Activated T-helper 2 cell treated with anti-CD3 and anti-CD28 coated beads, Interferon-gamma antibody, Interleukin-2, Interleukin-4, amounts not matched to agents 10 μg/mL and 5 μg/mL and 100 μg/mL, durations not matched to agents 14 hours and 24 hours and 36 hours (primary cell): ENCODE measurements at regions of chr15 and their contacts with region 1.

Region 1: DNA sequence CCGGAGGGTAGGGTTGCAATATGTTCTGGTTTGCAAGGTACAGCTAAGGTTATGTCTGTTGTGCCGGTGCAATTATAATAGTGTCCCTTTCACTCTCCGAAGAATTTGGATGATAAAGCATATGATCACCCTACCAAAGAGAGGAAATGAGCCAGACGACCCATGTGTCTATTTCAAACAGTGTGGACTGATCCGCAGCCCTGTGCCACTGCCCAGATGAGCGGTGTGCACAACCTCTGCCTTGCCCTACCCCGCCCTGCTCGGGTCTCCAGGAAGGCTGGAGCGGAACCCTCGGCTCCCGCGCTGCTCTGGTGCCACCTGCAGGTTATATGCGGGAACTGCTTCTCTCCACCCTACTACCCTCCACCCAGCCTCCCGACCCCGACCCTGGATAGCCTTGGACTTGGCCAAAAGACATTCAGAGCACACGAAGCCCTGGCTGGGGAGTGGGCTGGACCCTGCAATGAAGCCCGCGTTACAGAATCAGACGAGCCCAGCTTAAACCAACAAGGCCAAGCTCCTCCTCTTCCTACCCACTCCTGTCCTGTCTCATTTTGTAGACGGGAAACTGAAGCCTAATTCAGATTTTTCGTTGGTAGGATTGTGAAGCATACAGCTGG is 68.4 kb upstream of the CHRNB4 start:
- DNase-seq: peak; percentile 58
- H3K4me3 Mint-ChIP-seq: no peak overlapping the region
- H3K27ac Mint-ChIP-seq: no peak overlapping the region
- H3K4me1 Mint-ChIP-seq: peaks cover 6% of the 10 kb centered on the region
- H3K27me3 Mint-ChIP-seq: peaks cover 36% of the 10 kb centered on the region

Region 2: GRCh38 chr15:78308422-78309032 is 400.8 kb before region 1 on chr15:
- intact Hi-C with region 1: loop called (anchors 2 kb)
- DNase-seq: peak; percentile 47
- H3K4me3 Mint-ChIP-seq: no peak overlapping the region
- H3K27ac Mint-ChIP-seq: no peak overlapping the region
- H3K4me1 Mint-ChIP-seq: no peaks in the 10 kb centered on the region
- H3K27me3 Mint-ChIP-seq: no peaks in the 10 kb centered on the region

Region 3: DNA sequence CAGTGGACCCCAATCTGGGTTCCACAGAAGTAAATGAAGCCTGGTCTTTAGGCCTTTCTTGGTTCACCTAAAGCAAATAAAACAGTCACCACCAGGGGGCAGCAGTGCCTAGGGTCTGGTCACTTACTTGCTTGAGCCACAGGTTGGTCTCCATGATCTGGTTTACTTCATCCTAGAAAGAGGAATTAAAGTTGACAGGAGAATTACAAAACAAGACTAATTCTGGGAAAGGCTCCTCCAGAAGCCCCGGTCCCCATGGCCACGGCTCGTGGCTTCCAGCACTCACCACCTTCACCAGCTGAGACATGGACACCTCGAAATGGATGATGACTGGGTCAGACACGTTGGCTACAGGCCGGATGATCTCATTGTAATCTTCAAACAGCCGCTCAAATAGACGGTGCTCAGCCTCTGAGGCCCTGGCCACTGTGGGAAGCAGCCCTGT is 90.9 kb before region 1 on chr15:
- intact Hi-C with region 1: loop called (anchors 1 kb)
- DNase-seq: peak; percentile 53
- H3K4me3 Mint-ChIP-seq: no peak overlapping the region
- H3K27ac Mint-ChIP-seq: no peak overlapping the region
- H3K4me1 Mint-ChIP-seq: peaks cover 3% of the 10 kb centered on the region
- H3K27me3 Mint-ChIP-seq: peaks cover 43% of the 10 kb centered on the region

Region 4: GRCh38 chr15:78640840-78641719 is 68.3 kb before region 1 on chr15 and contains the start of gene CHRNB4:
- intact Hi-C with region 1: loop called (anchors 1 kb)
- DNase-seq: no peak
- H3K4me3 Mint-ChIP-seq: peak within 1 kb of the TSS; percentile 61
- H3K27ac Mint-ChIP-seq: no peak within 1 kb of the TSS
- H3K4me1 Mint-ChIP-seq: peaks cover 7% of the 10 kb centered on the region
- H3K27me3 Mint-ChIP-seq: peaks cover 11% of the 10 kb centered on the region
- total RNA-seq, gene CHRNB4: not detected in 2 replicates